ENCODE measurements at regions of chr21 and their contacts with region 1.

Region 1: GRCh38 chr21:35932232-35932911 is 128.0 kb downstream of the SETD4 start:
- DNase-seq: peak; percentile 50 to 58 (median 58)
- ATAC-seq: peak; percentile 74 to 89
- H3K4me3 ChIP-seq: no peak overlapping the region
- H3K27ac ChIP-seq: peak overlapping the region; percentile 90
- H3K4me1 ChIP-seq: peaks cover 2% of the 10 kb centered on the region
- H3K27me3 ChIP-seq: no peaks in the 10 kb centered on the region

Region 2: GRCh38 chr21:35461700-35462099 is 470.7 kb before region 1 on chr21:
- intact Hi-C with region 1: loop called in 1 of 4 experiments (anchors 5 kb)
- DNase-seq: no peak
- ATAC-seq: no peak
- H3K4me3 ChIP-seq: no peak overlapping the region
- H3K27ac ChIP-seq: no peak overlapping the region
- H3K4me1 ChIP-seq: no peaks in the 10 kb centered on the region
- H3K27me3 ChIP-seq: no peaks in the 10 kb centered on the region

Region 3: DNA sequence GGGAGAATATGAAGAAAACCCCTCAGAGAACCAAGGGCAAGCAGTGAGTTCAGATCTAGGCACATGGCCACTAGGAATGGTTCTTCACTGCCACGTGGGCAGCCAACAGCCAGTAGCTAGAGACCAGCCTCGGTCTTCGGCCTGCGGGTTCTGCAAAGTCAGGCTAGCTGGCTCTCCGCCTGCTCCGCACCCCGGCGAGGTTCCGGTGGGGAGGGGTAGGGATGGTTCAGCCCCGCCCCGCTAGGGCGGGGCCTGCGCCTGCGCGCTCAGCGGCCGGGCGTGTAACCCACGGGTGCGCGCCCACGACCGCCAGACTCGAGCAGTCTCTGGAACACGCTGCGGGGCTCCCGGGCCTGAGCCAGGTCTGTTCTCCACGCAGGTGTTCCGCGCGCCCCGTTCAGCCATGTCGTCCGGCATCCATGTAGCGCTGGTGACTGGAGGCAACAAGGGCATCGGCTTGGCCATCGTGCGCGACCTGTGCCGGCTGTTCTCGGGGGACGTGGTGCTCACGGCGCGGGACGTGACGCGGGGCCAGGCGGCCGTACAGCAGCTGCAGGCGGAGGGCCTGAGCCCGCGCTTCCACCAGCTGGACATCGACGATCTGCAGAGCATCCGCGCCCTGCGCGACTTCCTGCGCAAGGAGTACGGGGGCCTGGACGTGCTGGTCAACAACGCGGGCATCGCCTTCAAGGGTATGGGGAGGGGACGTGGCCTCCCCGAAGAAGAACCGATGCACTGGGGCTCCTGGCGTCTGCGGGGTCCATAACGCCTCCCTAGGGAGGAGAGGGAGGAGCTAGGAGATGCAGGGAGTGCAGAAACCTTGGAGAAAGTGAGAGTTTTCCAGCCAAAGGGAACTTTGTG is 137.6 kb after region 1 on chr21 and contains the start of gene CBR1:
- intact Hi-C with region 1: no loop called
- DNase-seq: peak; percentile 97 to 99 (median 98)
- ATAC-seq: peak; percentile 98
- H3K4me3 ChIP-seq: peak within 1 kb of the TSS; percentile 38
- H3K27ac ChIP-seq: peak within 1 kb of the TSS; percentile 42
- H3K4me1 ChIP-seq: peaks cover 9% of the 10 kb centered on the region
- H3K27me3 ChIP-seq: no peaks in the 10 kb centered on the region
- total RNA-seq, gene CBR1: 20.5 to 35.1 (median 29.3) TPM

Measured in right cardiac atrium (tissue), 5 donors.